OCI-LY7 (cell line): ENCODE measurements at regions of chr19 and their contacts with region 1.

Region 1: GRCh38 chr19:12938234-12939025 is at the start of gene CALR:
- DNase-seq: peak; percentile 100
- H3K4me3 ChIP-seq: peak within 1 kb of the TSS; percentile 98
- H3K27ac ChIP-seq: peak within 1 kb of the TSS; percentile 94
- H3K4me1 ChIP-seq: peaks cover 70% of the 10 kb centered on the region
- CTCF ChIP-seq: 0 out of 2 replicates have a peak, but pooled peaks have one; percentile 25
- total RNA-seq, gene CALR: 1,039 and 1,069 TPM in 2 replicates

Region 2: DNA sequence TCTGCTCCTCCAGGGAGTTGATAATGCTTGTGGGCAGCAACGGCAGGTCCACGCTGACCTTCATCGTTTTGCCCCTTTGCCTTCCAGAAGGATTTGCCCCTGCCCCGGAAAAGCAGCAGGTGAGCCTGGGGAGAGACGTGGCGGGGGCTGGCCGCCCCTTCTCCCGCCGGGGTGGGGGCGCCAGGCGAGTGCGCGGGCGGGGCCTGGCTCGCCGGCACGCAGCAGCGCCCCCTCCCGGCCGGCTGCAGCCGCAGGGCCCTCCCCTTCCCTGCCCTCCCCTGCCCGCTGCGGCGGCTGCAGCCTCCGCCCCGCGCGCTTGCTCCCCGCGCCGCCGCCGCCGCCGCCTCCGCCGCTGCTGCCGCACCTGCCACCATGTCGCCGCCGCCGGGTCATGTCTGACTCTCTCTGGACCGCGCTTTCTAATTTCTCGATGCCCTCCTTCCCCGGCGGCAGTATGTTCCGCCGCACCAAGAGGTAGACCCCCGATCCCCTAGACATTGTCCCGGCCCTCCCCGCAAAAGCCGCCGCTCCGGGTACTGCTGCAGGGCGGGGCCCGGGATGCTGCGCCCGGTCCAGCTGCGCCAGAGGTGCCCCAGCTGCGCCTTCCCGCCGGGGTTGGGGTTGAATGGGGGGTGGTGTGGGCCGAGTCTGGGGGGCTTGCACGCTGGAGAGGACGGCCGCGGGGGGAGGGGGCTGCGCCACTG is 100.1 kb before region 1 on chr19 and contains the start of gene MAST1:
- CTCF ChIA-PET with region 1: no interaction called
- POLR2A ChIA-PET with region 1: no interaction called
- intact Hi-C with region 1: loop called (anchors 5 kb)
- DNase-seq: peak; percentile 81
- H3K4me3 ChIP-seq: peak within 1 kb of the TSS; percentile 93
- H3K27ac ChIP-seq: peak within 1 kb of the TSS; percentile 45
- H3K4me1 ChIP-seq: peaks cover 67% of the 10 kb centered on the region
- CTCF ChIP-seq: peak; percentile 68
- total RNA-seq, gene MAST1: 5.5 and 9.1 TPM in 2 replicates

Region 3: DNA sequence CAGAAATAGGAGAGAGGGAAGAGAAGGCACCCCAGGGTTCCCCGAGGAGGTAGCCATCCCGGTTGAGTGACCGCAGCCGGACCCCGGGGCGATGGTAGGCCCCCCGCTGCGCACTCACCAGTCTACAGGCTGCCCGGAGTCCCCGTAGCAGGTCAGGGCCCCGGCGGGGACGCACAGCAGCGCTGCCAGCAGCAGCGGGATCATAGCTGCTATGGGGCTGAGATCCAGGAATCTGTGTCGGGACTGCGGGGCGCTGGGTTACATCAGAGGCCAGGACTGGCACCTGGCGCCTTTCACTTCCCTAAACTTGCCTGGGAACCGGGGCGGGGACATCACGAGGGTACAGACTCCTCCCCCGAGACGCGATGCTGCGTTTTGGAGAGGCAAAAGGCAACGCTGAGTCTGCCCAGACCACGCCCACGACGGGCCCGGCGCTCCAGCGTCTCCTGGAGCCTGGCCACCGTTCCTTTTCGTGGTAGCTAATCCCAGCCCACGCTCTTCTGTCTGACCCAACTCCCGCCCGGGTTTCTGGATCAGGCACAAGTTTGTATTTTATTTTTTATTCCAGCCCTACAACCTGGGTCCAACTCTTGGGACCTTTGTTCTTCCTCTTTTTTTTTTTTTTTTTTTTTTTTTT is 57.1 kb before region 1 on chr19 and contains the start of gene DNASE2:
- CTCF ChIA-PET with region 1: no interaction called
- POLR2A ChIA-PET with region 1: interaction called, 4 read pairs
- intact Hi-C with region 1: loop called (anchors 1 kb)
- DNase-seq: peak; percentile 99
- H3K4me3 ChIP-seq: peak within 1 kb of the TSS; percentile 87
- H3K27ac ChIP-seq: peak within 1 kb of the TSS; percentile 76
- H3K4me1 ChIP-seq: peaks cover 26% of the 10 kb centered on the region
- CTCF ChIP-seq: no peak
- total RNA-seq, gene DNASE2: 28.3 and 32.4 TPM in 2 replicates

Region 4: GRCh38 chr19:12890787-12891552 is 47.5 kb before region 1 on chr19 and contains the start of gene GCDH:
- CTCF ChIA-PET with region 1: no interaction called
- POLR2A ChIA-PET with region 1: no interaction called
- intact Hi-C with region 1: loop called (anchors 2 kb)
- DNase-seq: peak; percentile 99
- H3K4me3 ChIP-seq: peak within 1 kb of the TSS; percentile 91
- H3K27ac ChIP-seq: peak within 1 kb of the TSS; percentile 50
- H3K4me1 ChIP-seq: peaks cover 14% of the 10 kb centered on the region
- CTCF ChIP-seq: no peak
- total RNA-seq, gene GCDH: 31.5 and 40.7 TPM in 2 replicates

Region 5: DNA sequence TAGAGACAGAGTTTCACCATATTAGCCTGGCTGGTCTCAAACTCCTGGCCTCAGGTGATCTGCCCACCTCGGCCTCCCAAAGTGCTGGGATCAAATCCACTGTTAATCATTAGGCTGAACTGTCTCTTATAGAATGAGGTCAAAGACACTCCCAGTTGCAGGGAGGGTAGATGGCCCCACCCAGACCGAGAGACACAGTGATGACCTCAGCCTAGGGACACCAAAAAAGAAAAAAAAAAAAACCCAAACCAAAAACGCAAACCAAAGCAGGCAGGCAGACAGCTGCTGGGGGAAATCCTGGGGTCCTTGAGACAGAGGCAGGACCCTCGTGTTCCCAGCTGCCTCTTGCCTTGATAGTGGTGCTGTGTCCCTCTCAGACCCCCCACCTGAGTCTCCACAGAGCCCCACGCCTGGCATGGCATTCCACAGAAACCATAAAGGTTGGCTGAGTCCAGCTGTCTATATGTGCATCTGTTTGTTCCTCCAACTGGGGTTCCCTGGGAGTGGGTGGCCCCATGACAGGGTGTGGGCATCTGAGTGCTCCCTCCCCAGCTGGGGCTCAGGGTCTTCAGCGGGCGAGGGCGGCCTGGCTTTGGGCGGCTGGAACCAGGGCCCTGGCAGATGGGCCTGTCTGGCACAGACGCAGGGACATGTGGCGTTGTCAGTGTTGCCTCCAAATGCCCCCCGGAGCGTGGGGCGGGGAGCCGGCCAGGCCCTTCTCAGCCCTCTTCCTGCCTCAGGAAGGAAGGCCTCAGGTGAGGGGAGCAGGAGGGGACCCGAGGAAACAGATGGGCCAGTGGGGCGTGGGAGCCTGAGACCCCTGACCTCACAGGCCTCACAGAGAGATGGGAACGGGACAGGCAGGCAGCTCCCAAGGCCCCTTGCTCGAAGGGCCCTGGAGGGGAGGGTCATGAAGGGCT is 36.1 kb after region 1 on chr19:
- CTCF ChIA-PET with region 1: no interaction called
- POLR2A ChIA-PET with region 1: no interaction called
- intact Hi-C with region 1: no loop called
- DNase-seq: no peak
- H3K4me3 ChIP-seq: no peak overlapping the region
- H3K27ac ChIP-seq: no peak overlapping the region
- H3K4me1 ChIP-seq: no peaks in the 10 kb centered on the region
- CTCF ChIP-seq: no peak

Region 6: DNA sequence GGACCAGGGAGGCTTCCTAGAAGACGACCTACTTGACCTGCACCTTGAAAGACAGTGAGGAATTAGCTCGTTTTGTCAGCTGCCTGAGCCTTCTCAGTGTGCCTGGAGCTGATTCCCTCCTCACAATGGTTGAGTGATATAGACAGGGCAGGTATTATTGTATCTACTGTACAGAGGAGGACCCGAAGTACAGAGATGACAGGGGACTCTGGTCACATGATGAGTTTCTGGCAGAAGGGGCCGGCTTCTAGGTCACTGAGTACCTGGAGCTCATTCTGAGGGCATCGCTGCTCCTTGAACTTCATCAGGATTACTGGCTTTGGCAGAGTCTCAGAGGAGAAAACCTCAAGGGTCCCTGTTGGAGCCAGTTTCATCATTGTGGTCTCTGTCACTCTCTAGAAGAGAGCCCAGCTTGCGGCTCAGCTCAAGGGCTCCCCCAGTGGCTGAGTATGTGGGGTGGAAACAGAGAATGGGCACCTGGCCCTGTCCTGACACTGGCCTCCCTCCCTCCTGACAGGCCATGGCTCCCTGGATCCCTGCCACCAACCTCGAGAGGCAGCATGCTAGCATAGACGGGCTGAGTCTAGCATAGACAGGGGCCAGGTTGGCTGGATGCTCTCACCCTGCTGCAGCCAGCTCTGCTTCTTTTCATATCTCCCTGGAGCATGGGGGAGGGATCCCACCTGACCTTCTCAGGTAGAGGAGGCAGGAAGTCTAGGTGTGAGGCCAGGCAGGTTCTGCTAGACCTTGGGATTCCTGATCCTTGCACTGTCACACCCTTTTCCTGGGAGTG is 95.6 kb after region 1 on chr19:
- CTCF ChIA-PET with region 1: no interaction called
- POLR2A ChIA-PET with region 1: no interaction called
- intact Hi-C with region 1: no loop called
- DNase-seq: peak; percentile 54
- H3K4me3 ChIP-seq: no peak overlapping the region
- H3K27ac ChIP-seq: no peak overlapping the region
- H3K4me1 ChIP-seq: no peaks in the 10 kb centered on the region
- CTCF ChIP-seq: peak; percentile 91